ENCODE measurements at regions of chr1 and their contacts with region 1.

Region 1: DNA sequence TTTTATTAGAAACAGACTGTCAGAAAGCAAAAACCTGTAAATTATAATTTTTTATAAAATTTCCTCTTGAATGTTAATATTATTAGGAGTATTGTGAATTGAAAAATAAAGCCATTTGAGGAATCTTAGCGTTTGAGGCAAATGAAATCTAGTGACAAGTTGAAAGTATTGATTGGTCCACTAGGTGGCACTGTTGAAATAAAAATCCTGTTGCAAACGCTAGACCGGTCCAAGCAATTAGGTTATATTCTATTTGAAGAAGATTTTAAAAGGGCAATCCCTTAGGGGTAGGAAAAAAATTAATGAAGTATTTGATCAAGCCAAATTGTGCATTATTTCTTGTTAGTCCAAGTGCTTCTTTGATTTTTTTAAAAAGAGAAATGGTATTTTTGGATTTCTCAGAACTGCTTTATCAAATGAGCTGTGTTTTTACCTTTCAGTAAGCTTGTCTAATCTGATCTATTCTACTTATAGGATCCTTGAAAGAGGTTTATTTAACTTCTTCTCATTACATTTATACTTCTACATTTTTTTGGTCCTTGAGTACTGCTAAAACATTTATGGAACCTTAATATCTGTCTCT is 57.7 kb downstream of the ATG4C start:
- DNase-seq: peak; percentile 65
- H3K4me3 ChIP-seq: no peak overlapping the region
- H3K27ac ChIP-seq: no peak overlapping the region
- H3K4me1 ChIP-seq: no peaks in the 10 kb centered on the region
- CTCF ChIP-seq: peak; percentile 90

Region 2: DNA sequence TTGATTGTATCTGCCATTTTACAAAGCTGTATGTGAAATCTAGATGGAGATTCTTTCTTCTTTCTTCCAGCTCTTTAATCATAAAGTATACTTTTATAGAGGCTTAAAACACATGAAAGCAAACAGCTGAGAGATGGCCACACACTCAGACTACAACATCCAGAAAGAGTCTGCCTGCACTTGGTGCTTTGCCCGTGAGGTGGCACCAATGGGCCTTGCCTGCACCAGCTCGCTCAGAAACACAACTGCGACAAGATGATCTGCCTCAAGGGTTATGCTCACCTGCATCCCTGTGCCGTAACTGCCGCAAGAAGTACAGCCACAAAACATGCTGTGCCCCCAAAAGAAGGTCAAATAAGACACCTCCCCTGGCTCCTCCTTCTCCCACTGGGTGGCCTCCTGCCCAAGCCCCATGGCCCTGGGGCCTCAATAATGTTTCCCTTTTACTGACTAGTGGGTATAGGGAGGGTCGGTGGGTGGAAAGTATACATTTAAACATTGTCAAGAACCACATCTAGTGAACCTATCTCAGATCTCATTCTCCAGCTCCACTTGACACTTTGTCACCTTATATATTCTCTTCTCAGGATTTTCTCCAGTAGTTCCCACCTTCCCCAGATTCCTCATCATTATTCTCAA is 311.0 kb before region 1 on chr1:
- CTCF ChIA-PET with region 1: no interaction called
- POLR2A ChIA-PET with region 1: no interaction called
- intact Hi-C with region 1: loop called (anchors 10 kb)
- DNase-seq: peak; percentile 65
- H3K4me3 ChIP-seq: no peak overlapping the region
- H3K27ac ChIP-seq: no peak overlapping the region
- H3K4me1 ChIP-seq: no peaks in the 10 kb centered on the region
- CTCF ChIP-seq: peak; percentile 84

Region 3: GRCh38 chr1:63537940-63538339 is 696.3 kb after region 1 on chr1:
- CTCF ChIA-PET with region 1: no interaction called
- POLR2A ChIA-PET with region 1: no interaction called
- intact Hi-C with region 1: loop called (anchors 5 kb)
- DNase-seq: peak; percentile 28
- H3K4me3 ChIP-seq: no peak overlapping the region
- H3K27ac ChIP-seq: no peak overlapping the region
- H3K4me1 ChIP-seq: no peaks in the 10 kb centered on the region
- CTCF ChIP-seq: peak; percentile 87

Measured in OCI-LY7 (cell line).